ENCODE measurements at regions of chr11 and their contacts with region 1.

Region 1: GRCh38 chr11:67265633-67266423 is 445 bp upstream of the GRK2 start:
- DNase-seq: no peak
- H3K4me3 ChIP-seq: peak overlapping the region in 1 of 2 donors; percentile 21
- H3K27ac ChIP-seq: peak overlapping the region; percentile 91
- H3K4me1 ChIP-seq: peaks cover 86% of the 10 kb centered on the region
- H3K27me3 ChIP-seq: no peaks in the 10 kb centered on the region
- CTCF ChIP-seq: peak; percentile 62 to 77 (median 73)
- POLR2A ChIP-seq: no peak

Region 2: DNA sequence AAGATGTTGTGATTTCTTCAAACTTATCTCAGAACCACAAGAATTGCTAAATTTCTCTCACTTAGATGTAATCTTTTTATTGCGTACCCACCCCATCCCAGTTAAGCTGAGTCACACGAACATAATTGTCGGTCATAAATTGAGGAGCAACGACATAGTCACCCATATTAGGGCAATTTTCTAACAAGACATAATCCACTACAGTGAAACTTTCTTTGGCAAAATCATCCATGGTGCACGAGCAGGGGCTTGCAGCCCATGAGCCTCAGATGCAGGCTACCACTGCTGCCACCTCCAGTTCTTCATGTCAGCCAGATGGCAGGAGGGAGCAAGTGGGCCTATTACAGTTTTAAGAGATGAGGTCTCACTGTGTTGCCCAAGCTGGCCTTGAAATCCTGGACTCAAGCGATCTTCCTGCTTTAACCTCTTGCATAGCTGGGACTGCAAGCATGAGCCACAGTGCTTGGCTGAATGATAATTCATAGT is 69.8 kb before region 1 on chr11:
- intact Hi-C with region 1: no loop called
- DNase-seq: no peak
- H3K4me3 ChIP-seq: no peak overlapping the region
- H3K27ac ChIP-seq: peak overlapping the region; percentile 3
- H3K4me1 ChIP-seq: peaks cover 5% of the 10 kb centered on the region
- H3K27me3 ChIP-seq: no peaks in the 10 kb centered on the region
- CTCF ChIP-seq: no peak
- POLR2A ChIP-seq: no peak

Region 3: DNA sequence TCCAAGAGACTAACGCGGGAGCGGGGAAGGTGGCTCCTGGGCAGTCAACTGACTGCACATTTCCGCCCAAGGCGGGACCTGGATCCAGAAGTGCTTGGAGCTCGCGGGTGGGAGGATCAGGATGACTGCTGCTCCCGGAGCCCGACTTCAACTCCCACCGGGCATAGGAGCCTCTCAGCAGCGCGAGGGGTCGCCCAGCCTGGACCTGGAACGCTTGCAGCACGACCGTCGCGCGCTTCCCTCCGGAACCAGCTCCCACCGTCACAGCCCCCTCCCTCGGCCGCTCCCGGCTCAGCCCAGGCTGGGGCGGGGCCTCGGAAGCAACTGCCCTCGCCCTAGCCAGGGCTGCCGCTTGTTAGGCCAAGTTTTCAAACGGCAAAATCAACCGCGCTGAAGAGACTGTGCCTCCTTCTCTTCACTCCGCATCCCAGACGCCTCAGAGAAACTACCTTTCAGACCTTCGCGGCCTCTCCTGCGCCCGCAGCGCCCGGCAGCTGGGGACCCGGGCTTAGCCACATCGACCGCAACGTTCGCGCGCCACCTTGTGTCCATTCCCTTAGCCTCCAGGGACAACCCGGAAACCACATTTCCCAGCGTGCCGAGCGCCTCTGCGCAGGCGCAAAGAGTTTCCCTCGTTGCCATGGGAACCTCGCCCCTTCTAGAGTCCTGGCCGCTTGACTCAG is 51.5 kb after region 1 on chr11:
- intact Hi-C with region 1: loop called (anchors 1 kb)
- DNase-seq: peak; percentile 95 to 98
- H3K4me3 ChIP-seq: peak overlapping the region; percentile 73 to 84
- H3K27ac ChIP-seq: peak overlapping the region; percentile 98
- H3K4me1 ChIP-seq: peaks cover 39% of the 10 kb centered on the region
- H3K27me3 ChIP-seq: no peaks in the 10 kb centered on the region
- CTCF ChIP-seq: peak; percentile 97 to 99 (median 98)
- POLR2A ChIP-seq: peak in 1 of 2 donors; percentile 57